ENCODE measurements at regions of chr14 and their contacts with region 1.

Region 1: GRCh38 chr14:68979021-68979782 is at the start of gene ACTN1:
- DNase-seq: peak; percentile 22
- H3K4me3 Mint-ChIP-seq: peak within 1 kb of the TSS; percentile 85
- H3K27ac Mint-ChIP-seq: peak within 1 kb of the TSS; percentile 68
- H3K4me1 Mint-ChIP-seq: peaks cover 22% of the 10 kb centered on the region
- H3K27me3 Mint-ChIP-seq: peaks cover 32% of the 10 kb centered on the region
- total RNA-seq, gene ACTN1: 27.4 and 27.9 TPM in 2 replicates

Region 2: GRCh38 chr14:69005432-69006147 is 26.4 kb after region 1 on chr14:
- intact Hi-C with region 1: no loop called
- DNase-seq: no peak
- H3K4me3 Mint-ChIP-seq: no peak overlapping the region
- H3K27ac Mint-ChIP-seq: no peak overlapping the region
- H3K4me1 Mint-ChIP-seq: no peaks in the 10 kb centered on the region
- H3K27me3 Mint-ChIP-seq: peaks cover 3% of the 10 kb centered on the region

Region 3: GRCh38 chr14:69090187-69090789 is 111.1 kb after region 1 on chr14:
- intact Hi-C with region 1: loop called (anchors 1 kb)
- DNase-seq: no peak
- H3K4me3 Mint-ChIP-seq: no peak overlapping the region
- H3K27ac Mint-ChIP-seq: no peak overlapping the region
- H3K4me1 Mint-ChIP-seq: peaks cover 21% of the 10 kb centered on the region
- H3K27me3 Mint-ChIP-seq: no peaks in the 10 kb centered on the region

Region 4: DNA sequence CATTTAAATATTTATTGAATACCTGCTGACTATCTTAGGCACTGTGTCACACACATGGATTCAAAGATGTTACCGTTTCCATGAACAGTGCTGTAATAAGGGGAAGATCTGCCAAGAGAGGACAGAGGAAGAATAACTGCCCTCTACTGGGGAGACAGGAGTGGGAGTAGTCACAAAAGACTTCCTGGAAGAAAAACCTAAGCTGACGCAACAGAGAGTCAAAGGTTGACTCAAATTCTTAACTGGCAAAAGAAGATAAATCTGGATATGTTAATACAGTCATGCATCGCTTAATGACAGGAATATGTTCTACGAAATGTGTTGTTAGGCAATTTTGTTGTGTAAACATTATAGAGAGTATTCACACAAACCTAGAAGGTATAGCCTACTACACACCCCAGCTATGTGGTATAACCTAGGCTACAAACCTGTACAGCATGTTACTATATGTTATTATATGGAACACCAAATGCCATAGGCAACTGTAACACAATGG is 122.2 kb after region 1 on chr14:
- intact Hi-C with region 1: no loop called
- DNase-seq: no peak
- H3K4me3 Mint-ChIP-seq: no peak overlapping the region
- H3K27ac Mint-ChIP-seq: no peak overlapping the region
- H3K4me1 Mint-ChIP-seq: peaks cover 10% of the 10 kb centered on the region
- H3K27me3 Mint-ChIP-seq: no peaks in the 10 kb centered on the region

Region 5: GRCh38 chr14:69153131-69153872 is 174.1 kb after region 1 on chr14:
- intact Hi-C with region 1: loop called (anchors 5 kb)
- DNase-seq: peak; percentile 90
- H3K4me3 Mint-ChIP-seq: peak overlapping the region; percentile 90
- H3K27ac Mint-ChIP-seq: peak overlapping the region; percentile 92
- H3K4me1 Mint-ChIP-seq: peaks cover 33% of the 10 kb centered on the region
- H3K27me3 Mint-ChIP-seq: peaks cover 39% of the 10 kb centered on the region

Region 6: GRCh38 chr14:69268763-69269162 is 289.6 kb after region 1 on chr14:
- intact Hi-C with region 1: no loop called
- DNase-seq: no peak
- H3K4me3 Mint-ChIP-seq: no peak overlapping the region
- H3K27ac Mint-ChIP-seq: no peak overlapping the region
- H3K4me1 Mint-ChIP-seq: no peaks in the 10 kb centered on the region
- H3K27me3 Mint-ChIP-seq: peaks cover 8% of the 10 kb centered on the region

Measured in activated T-helper 1 cell treated with anti-CD3 and anti-CD28 coated beads, Interleukin-12 subunit alpha, Interleukin-12 subunit beta, Interleukin-2, Interleukin-4 antibody, amounts not matched to agents 30 ng/mL and 10 ng/mL and 1 ng/mL, durations not matched to agents 14 hours and 24 hours and 36 hours (primary cell).